ENCODE measurements at regions of chr20 and their contacts with region 1.

Region 1: GRCh38 chr20:21719592-21720214 is 14.2 kb downstream of the PAX1 start:
- DNase-seq: peak in 1 of 2 donors; percentile 43
- ATAC-seq: no peak

Region 2: GRCh38 chr20:21656308-21657073 is 63.2 kb before region 1 on chr20:
- intact Hi-C with region 1: loop called in 1 of 2 experiments (anchors 10 kb)
- DNase-seq: no peak
- ATAC-seq: no peak

Region 3: DNA sequence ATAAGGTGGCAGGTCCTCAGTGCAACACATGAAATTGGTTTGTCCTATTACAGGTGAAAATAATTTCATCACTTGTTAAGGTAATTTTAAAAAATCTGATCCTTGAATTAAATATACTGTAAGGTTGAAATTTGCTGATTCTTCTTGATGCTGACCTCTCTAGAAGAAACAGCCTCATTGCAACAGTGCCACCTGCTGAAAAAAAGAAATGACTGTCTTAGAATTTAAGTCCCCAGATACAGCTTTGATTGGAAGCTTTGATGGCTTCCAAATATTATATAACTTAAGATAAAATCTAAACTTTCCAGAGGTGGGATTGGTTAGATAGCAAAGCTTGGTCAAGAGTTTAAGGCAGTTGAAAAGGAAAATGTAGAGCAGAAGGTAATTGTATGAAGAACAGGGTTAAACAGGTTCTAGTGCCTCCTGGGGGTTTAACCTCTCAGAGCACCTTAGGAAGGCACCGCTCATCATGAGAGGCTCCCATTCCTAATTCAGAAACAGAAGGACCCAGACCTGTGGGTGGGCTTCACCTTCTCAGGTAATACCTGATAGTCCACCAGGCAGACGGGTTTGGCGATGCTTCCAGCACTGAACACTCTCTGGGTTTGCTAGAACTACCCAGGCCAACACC is 386.7 kb after region 1 on chr20:
- intact Hi-C with region 1: loop called in 1 of 2 experiments (anchors 2 kb)
- DNase-seq: no peak
- ATAC-seq: no peak